ENCODE measurements at regions of chr3 and their contacts with region 1.

Region 1: GRCh38 chr3:117526470-117527079 is 817.0 kb downstream of the TUSC7 start:
- DNase-seq: no peak
- ATAC-seq: peak; percentile 64
- H3K4me3 ChIP-seq: no peak overlapping the region
- H3K27ac ChIP-seq: no peak overlapping the region
- H3K4me1 ChIP-seq: no peaks in the 10 kb centered on the region
- H3K27me3 ChIP-seq: no peaks in the 10 kb centered on the region
- CTCF ChIP-seq: peak; percentile 56 to 61 (median 59)
- EP300 ChIP-seq: no peak
- POLR2A ChIP-seq: no peak
- RAD21 ChIP-seq: peak; percentile 84

Region 2: GRCh38 chr3:116770815-116771450 is 755.6 kb before region 1 on chr3:
- CTCF ChIA-PET with region 1: interaction called, 22 read pairs
- POLR2A ChIA-PET with region 1: no interaction called
- RAD21 ChIA-PET with region 1: interaction called, 15 read pairs
- SMC1A ChIA-PET with region 1: interaction called, 22 read pairs
- in situ Hi-C with region 1: loop called (anchors 10 kb)
- intact Hi-C with region 1: loop called (anchors 1 kb)
- DNase-seq: peak; percentile 37
- ATAC-seq: peak; percentile 98
- H3K4me3 ChIP-seq: no peak overlapping the region
- H3K27ac ChIP-seq: no peak overlapping the region
- H3K4me1 ChIP-seq: no peaks in the 10 kb centered on the region
- H3K27me3 ChIP-seq: no peaks in the 10 kb centered on the region
- CTCF ChIP-seq: peak; percentile 89 to 99 (median 99)
- EP300 ChIP-seq: no peak
- POLR2A ChIP-seq: no peak
- RAD21 ChIP-seq: peak; percentile 99

Region 3: DNA sequence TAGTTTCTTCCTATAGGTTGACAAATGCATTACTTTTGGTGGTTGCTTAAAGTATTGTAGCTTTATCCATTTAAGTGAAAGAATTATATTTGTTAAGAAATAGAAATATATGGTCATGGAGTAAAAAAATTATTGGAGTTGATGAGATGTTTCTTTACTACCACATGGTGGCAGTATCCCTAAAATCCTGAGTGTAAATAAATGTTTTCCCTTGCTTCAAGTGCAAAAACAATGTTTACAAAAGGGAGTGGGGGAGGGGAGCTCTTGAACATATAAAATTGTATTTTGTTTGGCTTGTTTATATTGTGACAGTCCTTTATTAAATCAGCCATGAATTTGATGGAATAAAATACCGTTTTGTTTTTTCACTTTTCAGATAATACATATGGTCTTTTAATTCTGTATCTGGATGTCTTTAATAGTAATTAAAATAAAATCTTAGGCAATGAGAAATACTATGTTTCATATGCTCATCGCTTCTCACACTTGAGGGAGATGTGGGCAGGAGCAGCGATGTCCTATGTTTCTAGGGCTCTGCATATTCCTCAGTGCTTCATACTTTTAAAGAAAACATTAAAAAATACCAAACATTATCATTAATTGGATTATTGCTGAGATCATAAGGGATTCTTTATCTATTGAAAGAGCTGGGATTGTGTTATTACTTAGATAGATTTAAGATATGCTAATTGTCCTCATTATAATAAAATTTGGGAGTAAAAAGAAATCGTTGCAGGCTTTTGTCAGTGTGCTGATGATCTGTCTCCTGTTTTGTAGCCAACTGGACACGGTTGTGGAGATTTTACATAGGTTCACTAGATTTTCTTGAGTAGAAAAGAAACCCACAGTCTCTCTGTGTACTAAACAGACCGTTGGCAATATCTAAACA is 467.3 kb before region 1 on chr3:
- CTCF ChIA-PET with region 1: interaction called, 13 read pairs
- POLR2A ChIA-PET with region 1: no interaction called
- RAD21 ChIA-PET with region 1: interaction called, 11 read pairs
- SMC1A ChIA-PET with region 1: interaction called, 13 read pairs
- in situ Hi-C with region 1: no loop called
- intact Hi-C with region 1: no loop called
- DNase-seq: no peak
- ATAC-seq: no peak; the same call in 2 of the 3 replicates
- H3K4me3 ChIP-seq: no peak overlapping the region
- H3K27ac ChIP-seq: no peak overlapping the region
- H3K4me1 ChIP-seq: no peaks in the 10 kb centered on the region
- H3K27me3 ChIP-seq: no peaks in the 10 kb centered on the region
- CTCF ChIP-seq: peak; percentile 25 to 32 (median 26); a peak in 2 of 6 replicates
- EP300 ChIP-seq: no peak
- POLR2A ChIP-seq: no peak
- RAD21 ChIP-seq: peak; percentile 27; the same call in 1 of the 2 replicates

Region 4: DNA sequence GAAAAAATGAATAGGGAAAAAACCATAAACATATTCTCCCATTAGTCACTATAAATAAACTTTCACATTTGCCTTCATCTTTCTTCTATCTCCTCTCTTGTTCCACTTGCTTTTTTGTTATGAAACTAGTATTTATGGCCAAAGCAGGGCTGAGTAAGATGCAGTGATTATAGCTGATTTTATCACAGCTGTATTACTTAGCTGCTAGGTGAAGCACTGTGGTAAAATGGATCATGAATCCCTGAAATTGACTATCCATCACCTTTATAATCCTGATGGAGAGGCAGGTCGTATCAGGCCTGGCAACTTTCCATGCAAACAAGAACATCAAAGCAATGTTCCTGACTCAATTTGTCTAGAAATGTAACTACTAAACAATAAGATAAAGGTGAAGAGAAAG is 345.4 kb before region 1 on chr3:
- CTCF ChIA-PET with region 1: no interaction called
- POLR2A ChIA-PET with region 1: no interaction called
- RAD21 ChIA-PET with region 1: no interaction called
- SMC1A ChIA-PET with region 1: no interaction called
- in situ Hi-C with region 1: no loop called
- intact Hi-C with region 1: no loop called
- DNase-seq: no peak
- ATAC-seq: no peak
- H3K4me3 ChIP-seq: no peak overlapping the region
- H3K27ac ChIP-seq: no peak overlapping the region
- H3K4me1 ChIP-seq: no peaks in the 10 kb centered on the region
- H3K27me3 ChIP-seq: no peaks in the 10 kb centered on the region
- CTCF ChIP-seq: no peak
- EP300 ChIP-seq: no peak
- POLR2A ChIP-seq: no peak
- RAD21 ChIP-seq: no peak

Region 5: GRCh38 chr3:117433427-117433826 is 93.1 kb before region 1 on chr3:
- CTCF ChIA-PET with region 1: interaction called, 19 read pairs
- POLR2A ChIA-PET with region 1: no interaction called
- RAD21 ChIA-PET with region 1: interaction called, 9 read pairs
- SMC1A ChIA-PET with region 1: interaction called, 37 read pairs
- in situ Hi-C with region 1: no loop called
- intact Hi-C with region 1: no loop called
- DNase-seq: no peak
- ATAC-seq: no peak
- H3K4me3 ChIP-seq: no peak overlapping the region
- H3K27ac ChIP-seq: no peak overlapping the region
- H3K4me1 ChIP-seq: no peaks in the 10 kb centered on the region
- H3K27me3 ChIP-seq: no peaks in the 10 kb centered on the region
- CTCF ChIP-seq: no peak
- EP300 ChIP-seq: no peak
- POLR2A ChIP-seq: no peak
- RAD21 ChIP-seq: no peak

Region 6: GRCh38 chr3:117463276-117464115 is 63.1 kb before region 1 on chr3:
- CTCF ChIA-PET with region 1: interaction called, 3 read pairs
- POLR2A ChIA-PET with region 1: no interaction called
- RAD21 ChIA-PET with region 1: interaction called, 4 read pairs
- SMC1A ChIA-PET with region 1: interaction called, 10 read pairs
- in situ Hi-C with region 1: no loop called
- intact Hi-C with region 1: no loop called
- DNase-seq: no peak
- ATAC-seq: no peak
- H3K4me3 ChIP-seq: no peak overlapping the region
- H3K27ac ChIP-seq: no peak overlapping the region
- H3K4me1 ChIP-seq: no peaks in the 10 kb centered on the region
- H3K27me3 ChIP-seq: 0 out of 4 replicates have a peak, but pooled peaks cover 0 to 2% of the 10 kb centered on the region in 2 experiments
- CTCF ChIP-seq: no peak
- EP300 ChIP-seq: no peak
- POLR2A ChIP-seq: no peak
- RAD21 ChIP-seq: no peak

Region 7: GRCh38 chr3:117486719-117487716 is 39.6 kb before region 1 on chr3:
- CTCF ChIA-PET with region 1: interaction called, 14 read pairs
- POLR2A ChIA-PET with region 1: interaction called, 3 read pairs
- RAD21 ChIA-PET with region 1: interaction called, 36 read pairs
- SMC1A ChIA-PET with region 1: interaction called, 57 read pairs
- in situ Hi-C with region 1: no loop called
- intact Hi-C with region 1: no loop called
- DNase-seq: peak; percentile 40
- ATAC-seq: peak; percentile 88
- H3K4me3 ChIP-seq: no peak overlapping the region
- H3K27ac ChIP-seq: no peak overlapping the region
- H3K4me1 ChIP-seq: no peaks in the 10 kb centered on the region
- H3K27me3 ChIP-seq: no peaks in the 10 kb centered on the region; a peak in 1 of 4 replicates
- CTCF ChIP-seq: no peak
- EP300 ChIP-seq: peak; percentile 48 to 79; a peak in 2 of 4 replicates
- POLR2A ChIP-seq: no peak
- RAD21 ChIP-seq: no peak

Region 8: DNA sequence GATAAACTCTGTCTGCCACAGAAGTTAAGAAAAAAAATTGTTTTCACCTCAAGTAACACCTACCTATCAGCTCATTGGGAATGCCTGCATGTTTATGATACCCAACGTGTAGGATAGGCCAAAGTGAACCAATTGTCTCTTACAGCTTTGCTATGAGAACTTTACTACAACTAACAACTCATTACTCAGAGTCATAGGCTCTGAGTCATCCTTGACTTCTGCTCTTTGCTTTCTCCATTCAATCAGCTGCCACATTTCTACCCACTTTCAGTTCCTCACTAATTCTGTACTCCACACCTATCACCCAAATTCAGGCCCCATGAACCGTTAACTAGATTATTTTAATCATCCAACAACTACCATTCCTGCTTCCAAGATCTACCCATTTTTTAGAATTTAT is 26.9 kb after region 1 on chr3:
- CTCF ChIA-PET with region 1: interaction called, 3 read pairs
- POLR2A ChIA-PET with region 1: no interaction called
- RAD21 ChIA-PET with region 1: no interaction called
- SMC1A ChIA-PET with region 1: interaction called, 11 read pairs
- in situ Hi-C with region 1: no loop called
- intact Hi-C with region 1: no loop called
- DNase-seq: peak; percentile 23
- ATAC-seq: peak; percentile 99
- H3K4me3 ChIP-seq: no peak overlapping the region
- H3K27ac ChIP-seq: no peak overlapping the region
- H3K4me1 ChIP-seq: no peaks in the 10 kb centered on the region
- H3K27me3 ChIP-seq: no peaks in the 10 kb centered on the region
- CTCF ChIP-seq: no peak
- EP300 ChIP-seq: peak in 1 of 2 experiments; percentile 77; a peak in 1 of 4 replicates
- POLR2A ChIP-seq: no peak
- RAD21 ChIP-seq: no peak

Region 9: DNA sequence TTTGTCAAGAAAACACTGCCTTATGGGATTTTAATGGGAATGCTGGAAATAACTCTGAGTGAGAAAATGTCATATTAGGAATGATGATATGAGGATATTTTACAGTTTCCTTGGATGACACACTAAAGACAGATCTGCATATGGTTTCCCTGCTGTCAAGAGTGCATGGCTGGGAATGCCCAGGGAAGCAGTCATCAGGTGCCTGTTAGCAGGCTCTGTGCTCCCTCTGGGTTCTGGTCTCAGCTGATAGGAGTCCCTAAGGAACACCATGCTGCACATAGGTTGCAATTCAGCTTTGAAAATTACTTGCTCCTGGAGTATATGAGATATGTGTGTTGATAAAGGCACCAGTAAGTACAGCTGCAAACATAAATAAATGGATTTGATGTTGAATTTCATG is 247.6 kb after region 1 on chr3:
- CTCF ChIA-PET with region 1: no interaction called
- POLR2A ChIA-PET with region 1: no interaction called
- RAD21 ChIA-PET with region 1: no interaction called
- SMC1A ChIA-PET with region 1: no interaction called
- in situ Hi-C with region 1: no loop called
- intact Hi-C with region 1: no loop called
- DNase-seq: no peak
- ATAC-seq: no peak
- H3K4me3 ChIP-seq: no peak overlapping the region
- H3K27ac ChIP-seq: no peak overlapping the region
- H3K4me1 ChIP-seq: no peaks in the 10 kb centered on the region
- H3K27me3 ChIP-seq: no peaks in the 10 kb centered on the region
- CTCF ChIP-seq: no peak
- EP300 ChIP-seq: no peak
- POLR2A ChIP-seq: no peak
- RAD21 ChIP-seq: no peak